ENCODE measurements at regions of chr6 and their contacts with region 1.

Region 1: GRCh38 chr6:122432816-122433215 is 33.4 kb downstream of the HSF2 start:
- DNase-seq: no peak
- ATAC-seq: no peak

Region 2: GRCh38 chr6:122779667-122780066 is 346.9 kb after region 1 on chr6 and contains the start of gene FABP7:
- intact Hi-C with region 1: loop called (anchors 5 kb)
- DNase-seq: no peak
- ATAC-seq: no peak
- total RNA-seq, gene FABP7: not detected

Measured in sciatic nerve (tissue), 2 donors.